HAP-1 (cell line): ENCODE measurements at regions of chr22 and their contacts with region 1.

Region 1: GRCh38 chr22:50705208-50705691 is 32.6 kb downstream of the SHANK3 start:
- DNase-seq: peak; percentile 28 to 76
- H3K4me3 ChIP-seq: no peak overlapping the region
- H3K4me1 ChIP-seq: no peaks in the 10 kb centered on the region
- H3K27me3 ChIP-seq: no peaks in the 10 kb centered on the region

Region 2: GRCh38 chr22:50568599-50569001 is 136.7 kb before region 1 on chr22:
- in situ Hi-C with region 1: no loop called
- DNase-seq: no peak
- H3K4me3 ChIP-seq: no peak overlapping the region
- H3K4me1 ChIP-seq: 0 out of 2 replicates have a peak, but pooled peaks cover under 1% of the 10 kb centered on the region
- H3K27me3 ChIP-seq: no peaks in the 10 kb centered on the region

Region 3: GRCh38 chr22:50641696-50642607 is 63.3 kb before region 1 on chr22:
- in situ Hi-C with region 1: loop called (anchors 5 kb)
- DNase-seq: peak in 1 of 2 experiments; percentile 41
- H3K4me3 ChIP-seq: no peak overlapping the region
- H3K4me1 ChIP-seq: no peaks in the 10 kb centered on the region
- H3K27me3 ChIP-seq: peaks cover 11% of the 10 kb centered on the region; the same call in 1 of the 2 replicates

Region 4: DNA sequence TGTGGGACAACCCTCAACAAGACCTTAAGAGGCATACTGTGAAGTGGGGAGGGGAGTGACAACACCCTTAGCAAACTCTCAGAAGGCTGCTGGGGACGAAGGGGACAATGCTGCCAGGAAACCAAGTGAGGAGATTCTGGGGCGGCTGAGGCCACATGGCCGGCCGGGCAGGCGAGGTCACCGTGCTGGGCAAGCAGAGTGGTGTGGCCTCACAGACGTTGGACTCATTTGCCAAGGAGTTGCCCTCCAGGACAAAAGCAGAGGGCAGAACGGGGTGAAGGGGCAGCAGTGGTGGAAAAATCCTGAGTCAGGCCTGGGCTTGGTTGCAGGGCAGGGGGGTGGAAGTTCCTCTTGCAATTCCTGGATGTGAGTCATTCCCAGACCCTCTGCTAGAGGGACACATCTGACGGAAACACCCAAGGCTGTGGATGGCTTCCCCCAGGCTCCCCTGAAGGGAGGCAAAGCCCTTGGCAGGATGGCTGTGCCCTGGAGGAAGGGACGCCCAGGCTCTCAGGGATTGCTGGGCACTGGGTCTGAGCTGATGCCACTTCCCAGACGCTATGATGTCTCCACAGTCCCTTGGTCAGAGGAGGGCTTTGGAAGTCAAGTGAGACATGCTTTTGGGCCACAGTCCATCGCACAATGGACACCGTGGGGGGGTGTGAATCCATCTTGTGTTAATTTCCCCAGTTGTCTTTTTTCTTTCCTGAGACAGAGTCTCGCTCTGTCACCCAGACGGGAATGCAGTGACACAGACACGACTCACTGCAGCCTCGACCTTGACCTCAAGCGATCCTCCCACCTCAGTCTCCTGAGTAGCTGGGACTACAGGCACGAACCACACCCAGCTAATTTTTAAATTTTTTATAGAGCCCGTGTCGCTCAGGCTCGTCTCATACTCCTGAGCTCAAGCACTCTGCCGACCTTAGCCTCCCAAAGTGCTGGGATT is 48.9 kb before region 1 on chr22:
- in situ Hi-C with region 1: no loop called
- DNase-seq: no peak
- H3K4me3 ChIP-seq: no peak overlapping the region
- H3K4me1 ChIP-seq: no peaks in the 10 kb centered on the region
- H3K27me3 ChIP-seq: no peaks in the 10 kb centered on the region